ENCODE measurements at regions of chr4 and their contacts with region 1.

Region 1: DNA sequence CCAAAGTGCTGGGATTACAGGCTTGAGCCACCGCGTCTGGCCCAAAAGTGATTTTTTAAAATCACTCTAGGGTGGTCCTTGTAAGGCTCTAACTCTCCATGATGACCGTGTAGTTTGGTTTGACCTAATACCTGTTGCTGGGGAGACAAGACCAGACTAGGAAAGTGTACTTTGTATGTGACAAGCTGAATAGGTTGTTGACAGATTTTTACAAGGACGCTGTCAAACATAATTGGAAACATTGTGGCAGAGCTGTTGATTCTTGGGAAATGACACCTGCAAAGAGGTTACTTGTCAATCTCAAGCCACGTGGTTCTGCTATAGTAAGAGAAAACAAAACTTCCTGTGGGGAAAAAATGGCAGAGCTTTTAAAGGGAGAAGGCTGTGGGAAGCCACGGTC is 802.4 kb upstream of the HS3ST1 start:
- DNase-seq: no peak
- ATAC-seq: peak in 6 of 8 donors; percentile 30 to 94 (median 84)
- H3K4me3 ChIP-seq: no peak overlapping the region
- H3K27ac ChIP-seq: peak overlapping the region in 1 of 10 donors; percentile 20
- H3K4me1 ChIP-seq: no peaks in the 10 kb centered on the region
- H3K27me3 ChIP-seq: no peaks in the 10 kb centered on the region
- CTCF ChIP-seq: no peak

Region 2: GRCh38 chr4:12319765-12320164 is 88.7 kb after region 1 on chr4:
- intact Hi-C with region 1: no loop called
- DNase-seq: no peak
- ATAC-seq: no peak
- H3K4me3 ChIP-seq: no peak overlapping the region
- H3K27ac ChIP-seq: no peak overlapping the region
- H3K4me1 ChIP-seq: no peaks in the 10 kb centered on the region
- H3K27me3 ChIP-seq: no peaks in the 10 kb centered on the region
- CTCF ChIP-seq: no peak

Region 3: DNA sequence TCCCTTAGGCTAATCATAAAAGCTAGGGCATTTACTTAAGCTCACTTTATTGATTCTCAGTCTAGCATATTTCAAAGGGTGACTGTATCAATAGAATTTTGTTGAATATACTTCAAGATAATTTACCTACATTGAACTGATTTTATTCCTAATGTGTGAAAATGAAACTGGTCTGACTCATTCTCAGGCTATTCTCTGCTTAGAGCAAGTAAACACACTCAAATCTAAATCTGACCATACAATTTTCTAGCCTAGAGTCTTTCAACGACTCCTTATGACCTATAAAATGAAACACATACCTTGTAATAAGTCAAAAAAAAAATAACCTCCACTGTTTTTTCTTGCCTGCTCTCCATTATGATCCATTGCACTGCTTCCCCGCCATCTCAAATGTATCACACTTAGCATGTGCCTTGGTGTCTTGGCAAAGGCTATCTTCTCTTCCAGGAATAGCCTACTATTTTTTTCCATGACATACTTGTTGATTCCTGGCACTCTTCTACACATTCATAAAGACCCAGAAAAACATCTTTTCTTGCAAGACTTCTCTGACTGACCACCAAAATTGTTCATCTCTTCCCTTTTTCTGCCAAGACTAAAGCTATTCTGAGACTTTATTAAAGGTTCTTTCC is 162.6 kb after region 1 on chr4:
- intact Hi-C with region 1: loop called in 1 of 10 experiments (anchors 5 kb)
- DNase-seq: no peak
- ATAC-seq: peak in 4 of 8 donors; percentile 46 to 61 (median 54)
- H3K4me3 ChIP-seq: no peak overlapping the region
- H3K27ac ChIP-seq: peak overlapping the region in 3 of 10 donors; percentile 16 to 27 (median 17)
- H3K4me1 ChIP-seq: no peaks in the 10 kb centered on the region
- H3K27me3 ChIP-seq: no peaks in the 10 kb centered on the region
- CTCF ChIP-seq: no peak